B cell (primary cell): ENCODE measurements at regions of chr7 and their contacts with region 1.

Region 1: DNA sequence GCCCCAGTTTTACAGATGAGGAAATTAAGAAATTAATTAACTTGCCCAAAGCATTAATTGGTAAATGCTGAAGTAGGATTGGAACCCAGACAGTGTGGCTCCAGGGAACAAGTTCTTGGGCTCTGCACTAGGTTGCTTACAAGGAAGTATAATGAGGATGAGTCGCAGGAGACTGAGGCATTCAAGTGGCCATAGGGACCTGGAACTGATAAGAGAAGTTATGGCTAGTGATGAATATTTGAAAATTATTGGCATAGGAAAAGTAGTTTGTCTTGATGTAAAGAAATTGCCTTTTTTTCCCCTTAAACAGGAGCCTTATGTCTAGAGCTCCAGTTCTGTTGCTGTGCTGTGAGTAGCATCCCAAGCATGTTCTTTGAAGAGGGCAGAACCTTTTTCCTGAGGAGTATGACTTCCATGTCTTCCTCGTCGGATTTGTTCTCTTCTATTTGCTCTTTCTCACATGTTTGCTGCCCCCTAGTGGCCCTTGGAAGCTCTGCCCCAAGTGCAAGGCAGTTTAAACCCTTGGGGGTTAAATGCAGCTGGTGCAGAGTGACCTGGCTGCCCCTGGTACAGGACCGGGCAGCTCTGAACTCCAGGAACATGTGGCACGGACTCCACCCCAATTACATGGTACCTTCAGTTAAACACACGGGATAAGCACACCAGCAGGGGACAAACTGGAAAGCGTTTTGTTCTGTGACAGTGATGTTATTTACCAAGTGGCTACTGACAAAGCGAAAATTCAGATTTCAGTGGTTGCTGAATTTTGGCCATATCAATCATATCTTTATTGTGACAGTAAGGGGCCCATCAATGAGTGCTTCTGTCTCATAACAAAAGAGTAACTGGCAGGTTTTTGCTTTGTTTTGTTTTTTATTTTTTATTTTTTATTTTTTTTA is 148.8 kb downstream of the HECW1 start:
- DNase-seq: peak; percentile 70
- ATAC-seq: peak; percentile 53
- H3K4me3 ChIP-seq: no peak overlapping the region
- H3K4me3 Mint-ChIP-seq: no peak overlapping the region
- H3K27ac ChIP-seq: no peak overlapping the region
- H3K27ac Mint-ChIP-seq: no peak overlapping the region
- H3K4me1 ChIP-seq: no peaks in the 10 kb centered on the region
- H3K4me1 Mint-ChIP-seq: no peaks in the 10 kb centered on the region
- H3K27me3 ChIP-seq: peaks cover 0 to 2% (median 0%) of the 10 kb centered on the region in 4 experiments
- H3K27me3 Mint-ChIP-seq: peaks cover 8% of the 10 kb centered on the region
- CTCF ChIP-seq: peak; percentile 98

Region 2: DNA sequence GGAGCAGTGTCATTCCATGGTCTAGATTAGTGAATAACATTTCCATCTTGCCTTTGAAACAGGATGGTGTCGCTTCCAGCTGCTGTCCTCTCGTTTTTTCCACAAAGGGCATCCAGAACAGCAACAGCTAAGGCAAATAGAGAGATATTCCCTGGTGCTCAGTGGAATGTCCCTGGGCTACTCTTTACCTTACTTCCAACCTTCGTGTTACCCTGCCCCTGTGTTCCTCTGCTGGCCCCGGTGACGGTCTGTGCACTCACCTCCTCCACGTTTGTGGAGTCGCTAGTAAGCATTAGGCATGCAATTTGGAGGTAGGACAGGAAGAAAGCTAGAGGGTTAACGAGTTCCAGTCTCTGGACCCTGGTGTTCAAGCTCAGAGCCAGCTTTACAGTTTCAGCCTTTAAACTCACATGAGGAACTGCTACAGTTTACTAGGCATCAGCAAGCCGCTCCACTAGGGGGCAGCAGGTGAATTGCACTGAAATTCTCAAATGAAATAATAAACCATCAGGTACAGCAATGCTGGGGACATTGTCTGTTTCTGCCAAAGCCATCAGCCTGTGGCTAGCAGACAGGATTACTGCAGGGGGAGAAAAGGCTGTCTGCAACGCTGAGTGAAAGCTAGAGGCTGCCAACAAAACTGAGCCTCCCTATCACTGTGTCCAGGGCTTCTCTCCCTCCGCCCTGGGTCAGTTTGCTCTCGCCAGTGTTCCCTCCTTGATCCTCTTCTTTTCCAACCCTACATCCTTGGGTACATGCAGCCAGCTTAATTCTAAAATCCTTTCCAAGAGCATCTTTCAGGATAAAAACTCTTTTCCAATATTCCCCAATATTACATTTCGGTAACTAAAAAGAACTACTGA is 320.0 kb before region 1 on chr7:
- CTCF ChIA-PET with region 1: interaction called, 10 read pairs
- POLR2A ChIA-PET with region 1: no interaction called
- intact Hi-C with region 1: loop called (anchors 2 kb)
- DNase-seq: peak; percentile 74
- ATAC-seq: peak; percentile 53
- H3K4me3 ChIP-seq: no peak overlapping the region
- H3K4me3 Mint-ChIP-seq: no peak overlapping the region
- H3K27ac ChIP-seq: no peak overlapping the region
- H3K27ac Mint-ChIP-seq: no peak overlapping the region
- H3K4me1 ChIP-seq: no peaks in the 10 kb centered on the region
- H3K4me1 Mint-ChIP-seq: peaks cover 6% of the 10 kb centered on the region
- H3K27me3 ChIP-seq: no peaks in the 10 kb centered on the region
- H3K27me3 Mint-ChIP-seq: no peaks in the 10 kb centered on the region
- CTCF ChIP-seq: peak; percentile 91

Region 3: GRCh38 chr7:43248961-43249822 is 12.0 kb before region 1 on chr7:
- CTCF ChIA-PET with region 1: interaction called, 24 read pairs
- POLR2A ChIA-PET with region 1: no interaction called
- intact Hi-C with region 1: no loop called
- DNase-seq: no peak
- ATAC-seq: no peak
- H3K4me3 ChIP-seq: no peak overlapping the region
- H3K4me3 Mint-ChIP-seq: no peak overlapping the region
- H3K27ac ChIP-seq: no peak overlapping the region
- H3K27ac Mint-ChIP-seq: no peak overlapping the region
- H3K4me1 ChIP-seq: no peaks in the 10 kb centered on the region
- H3K4me1 Mint-ChIP-seq: no peaks in the 10 kb centered on the region
- H3K27me3 ChIP-seq: no peaks in the 10 kb centered on the region
- H3K27me3 Mint-ChIP-seq: peaks cover 15% of the 10 kb centered on the region
- CTCF ChIP-seq: no peak

Region 4: GRCh38 chr7:43721193-43721806 is 460.1 kb after region 1 on chr7:
- CTCF ChIA-PET with region 1: no interaction called
- POLR2A ChIA-PET with region 1: no interaction called
- intact Hi-C with region 1: loop called (anchors 5 kb)
- DNase-seq: peak; percentile 73
- ATAC-seq: peak; percentile 33
- H3K4me3 ChIP-seq: no peak overlapping the region
- H3K4me3 Mint-ChIP-seq: no peak overlapping the region
- H3K27ac ChIP-seq: no peak overlapping the region
- H3K27ac Mint-ChIP-seq: no peak overlapping the region
- H3K4me1 ChIP-seq: no peaks in the 10 kb centered on the region
- H3K4me1 Mint-ChIP-seq: peaks cover 22% of the 10 kb centered on the region
- H3K27me3 ChIP-seq: no peaks in the 10 kb centered on the region
- H3K27me3 Mint-ChIP-seq: no peaks in the 10 kb centered on the region
- CTCF ChIP-seq: peak; percentile 89